ENCODE measurements at regions of chr1 and their contacts with region 1.

Region 1: DNA sequence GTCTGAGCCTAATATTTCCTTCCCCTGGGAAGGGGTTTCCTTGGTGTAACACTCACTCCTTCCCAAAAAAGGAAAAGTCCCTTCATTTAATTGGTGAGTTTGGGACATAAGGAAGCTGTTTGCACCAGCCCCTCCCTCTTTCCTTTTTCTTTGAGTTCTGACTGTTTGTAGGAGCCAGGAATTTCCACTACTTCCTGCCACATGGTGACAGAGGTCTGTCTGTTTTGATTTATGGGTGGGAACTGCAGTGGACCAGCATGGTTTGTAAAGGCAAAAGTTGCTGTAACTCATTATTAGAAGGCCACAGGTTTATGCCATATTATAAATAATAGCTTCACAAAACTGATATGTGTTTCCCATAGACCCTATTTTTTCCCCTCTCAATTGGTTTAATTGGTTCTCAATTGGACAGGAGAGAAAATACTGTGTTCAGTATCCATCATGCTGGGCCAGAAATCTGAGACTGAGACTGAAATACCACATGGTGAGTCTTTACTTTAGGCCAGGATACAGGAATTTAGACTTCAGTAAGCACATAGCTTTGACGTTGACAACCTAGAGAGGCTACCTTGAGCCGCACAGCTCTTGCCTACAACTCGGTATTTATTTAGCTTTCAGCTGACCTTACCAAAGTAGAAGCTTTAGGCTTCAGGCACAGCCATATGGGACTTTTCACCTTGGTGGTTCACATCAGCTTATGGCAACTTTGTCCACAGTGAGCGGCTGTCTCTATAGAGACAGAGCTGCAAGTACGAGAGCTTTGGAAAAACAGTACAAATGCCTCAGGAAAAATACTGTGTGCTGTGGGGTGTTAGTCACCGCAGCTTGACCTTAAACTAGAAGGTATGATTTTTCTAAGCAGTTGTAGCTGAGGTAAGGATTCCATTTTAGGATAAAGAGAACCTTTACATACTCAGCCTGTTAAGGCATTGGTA is 40.0 kb upstream of the RGS7 start:
- H3K4me3 ChIP-seq: no peak overlapping the region
- H3K27ac ChIP-seq: no peak overlapping the region
- H3K4me1 ChIP-seq: peaks cover 3% of the 10 kb centered on the region
- CTCF ChIP-seq: no peak

Region 2: DNA sequence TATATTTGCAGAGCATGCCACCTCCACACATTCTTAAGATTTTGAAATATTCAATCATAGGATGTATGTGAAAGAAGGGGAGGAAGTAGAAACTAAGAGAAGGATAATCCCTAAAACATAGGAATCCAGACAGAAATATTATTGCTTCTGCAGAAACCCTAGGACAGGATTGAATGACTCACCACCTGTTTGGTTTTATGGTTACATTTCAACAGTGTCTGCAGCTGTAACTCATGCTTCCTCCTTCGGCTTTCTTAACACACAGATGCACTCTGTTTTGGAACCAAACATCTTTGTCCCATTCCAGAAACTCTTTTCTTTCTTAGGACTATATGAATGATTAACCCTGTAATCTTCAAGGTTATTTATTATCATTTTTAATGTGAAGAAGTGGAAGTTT is 60.7 kb before region 1 on chr1:
- CTCF ChIA-PET with region 1: no interaction called
- POLR2A ChIA-PET with region 1: interaction called, 10 read pairs
- H3K4me3 ChIP-seq: no peak overlapping the region
- H3K27ac ChIP-seq: no peak overlapping the region
- H3K4me1 ChIP-seq: no peaks in the 10 kb centered on the region
- CTCF ChIP-seq: no peak

Region 3: DNA sequence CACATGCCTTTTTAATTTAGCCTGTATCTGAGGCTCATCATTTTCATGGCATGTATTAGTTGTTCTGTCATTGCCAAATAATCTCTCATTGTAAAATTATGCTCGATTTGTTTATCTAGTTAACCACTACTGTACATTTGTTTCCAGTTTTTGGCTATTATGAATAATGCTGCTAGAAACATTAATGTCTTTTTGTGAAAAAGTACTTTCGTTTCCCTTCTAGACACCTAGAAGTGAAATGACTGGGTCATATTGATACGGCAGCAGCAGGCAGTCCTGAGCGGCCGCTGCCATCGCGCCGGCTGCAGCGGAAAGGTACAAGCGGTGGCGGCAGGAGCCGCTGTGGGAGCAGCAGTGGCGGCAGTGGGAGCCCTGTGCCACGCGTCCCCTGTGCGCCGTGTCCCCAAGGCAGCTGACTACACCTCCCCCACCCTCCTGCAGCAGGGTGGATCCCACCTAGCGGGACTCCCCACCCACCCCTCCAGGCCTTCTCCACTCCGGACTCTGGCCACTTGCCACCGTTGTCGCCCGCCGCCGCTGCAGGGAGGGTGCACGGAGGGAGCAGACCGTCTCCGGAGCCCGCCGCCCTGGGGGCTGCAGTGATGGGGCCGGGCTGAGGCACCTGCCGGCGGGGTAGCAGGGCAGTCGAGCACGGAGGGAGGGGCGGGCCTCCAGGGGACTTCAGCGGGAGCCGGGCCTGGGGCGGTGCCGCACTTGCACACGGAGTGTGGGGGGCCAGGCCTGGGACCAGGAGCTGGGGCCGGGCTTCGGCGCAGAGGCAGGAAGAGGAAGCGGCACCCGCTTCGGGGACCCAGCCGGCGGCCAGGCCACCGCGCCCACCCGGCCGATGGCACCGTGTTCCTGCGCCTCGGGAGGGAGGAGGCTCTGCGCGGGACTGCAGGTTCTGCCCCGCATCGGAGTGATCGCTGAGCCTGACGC is 26.8 kb after region 1 on chr1:
- CTCF ChIA-PET with region 1: no interaction called
- POLR2A ChIA-PET with region 1: no interaction called
- H3K4me3 ChIP-seq: peak overlapping the region; percentile 77
- H3K27ac ChIP-seq: peak overlapping the region; percentile 62; the same call in 1 of the 2 replicates
- H3K4me1 ChIP-seq: no peaks in the 10 kb centered on the region
- CTCF ChIP-seq: peak; percentile 93

Measured in HEK293 (cell line).